ENCODE measurements at regions of chr5 and their contacts with region 1.

Region 1: GRCh38 chr5:140647042-140647341 is 438 bp downstream of the NDUFA2 start:
- DNase-seq: peak; percentile 22

Region 2: GRCh38 chr5:140401362-140402257 is 245.4 kb before region 1 on chr5 and contains the start of gene ANKHD1:
- CTCF ChIA-PET with region 1: no interaction called
- POLR2A ChIA-PET with region 1: interaction called, 14 read pairs
- DNase-seq: peak; percentile 90

Region 3: DNA sequence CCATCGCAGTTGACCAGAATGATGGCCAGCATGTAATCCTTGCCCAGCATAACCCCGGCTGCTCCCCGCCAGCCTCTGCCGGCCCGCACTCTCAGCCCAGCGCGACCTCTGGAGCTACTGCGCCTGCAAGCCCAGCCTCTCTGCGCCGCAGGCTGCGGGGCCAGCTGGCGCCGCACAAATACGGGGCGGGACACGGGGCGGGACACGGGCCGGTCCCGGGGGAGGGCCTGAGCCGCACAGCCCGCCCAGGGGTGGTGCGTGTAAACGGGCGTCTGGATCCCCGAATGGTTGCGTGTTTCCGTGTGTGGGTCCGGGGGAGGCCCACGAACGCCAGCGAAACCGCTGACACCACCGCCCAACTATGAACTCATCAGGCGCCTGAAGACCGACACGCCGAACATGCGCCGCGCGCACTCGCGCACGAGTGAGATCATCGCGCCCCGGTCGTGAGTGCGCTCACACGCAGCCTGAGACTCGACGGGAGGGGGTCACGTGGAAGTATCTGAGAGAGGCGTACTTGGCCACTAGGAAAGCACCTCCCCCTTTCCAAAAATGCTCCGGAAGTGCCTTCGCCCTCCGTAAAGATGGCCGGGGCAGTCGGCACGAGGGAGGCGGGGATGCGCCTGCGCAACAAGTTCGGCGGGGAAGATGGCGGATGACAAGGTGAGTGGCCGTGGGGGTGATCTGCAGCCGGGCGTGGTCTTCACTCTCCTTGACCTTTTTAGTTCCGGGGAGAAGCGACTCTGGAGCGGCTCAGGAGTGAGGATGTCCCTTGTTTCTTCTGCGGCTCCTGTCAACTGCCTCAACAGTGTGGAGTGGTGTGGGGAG is 82.6 kb before region 1 on chr5 and contains the starts of genes APBB3 and SLC35A4:
- CTCF ChIA-PET with region 1: interaction called, 4 read pairs
- POLR2A ChIA-PET with region 1: interaction called, 16 read pairs
- DNase-seq: peak; percentile 94

Region 4: DNA sequence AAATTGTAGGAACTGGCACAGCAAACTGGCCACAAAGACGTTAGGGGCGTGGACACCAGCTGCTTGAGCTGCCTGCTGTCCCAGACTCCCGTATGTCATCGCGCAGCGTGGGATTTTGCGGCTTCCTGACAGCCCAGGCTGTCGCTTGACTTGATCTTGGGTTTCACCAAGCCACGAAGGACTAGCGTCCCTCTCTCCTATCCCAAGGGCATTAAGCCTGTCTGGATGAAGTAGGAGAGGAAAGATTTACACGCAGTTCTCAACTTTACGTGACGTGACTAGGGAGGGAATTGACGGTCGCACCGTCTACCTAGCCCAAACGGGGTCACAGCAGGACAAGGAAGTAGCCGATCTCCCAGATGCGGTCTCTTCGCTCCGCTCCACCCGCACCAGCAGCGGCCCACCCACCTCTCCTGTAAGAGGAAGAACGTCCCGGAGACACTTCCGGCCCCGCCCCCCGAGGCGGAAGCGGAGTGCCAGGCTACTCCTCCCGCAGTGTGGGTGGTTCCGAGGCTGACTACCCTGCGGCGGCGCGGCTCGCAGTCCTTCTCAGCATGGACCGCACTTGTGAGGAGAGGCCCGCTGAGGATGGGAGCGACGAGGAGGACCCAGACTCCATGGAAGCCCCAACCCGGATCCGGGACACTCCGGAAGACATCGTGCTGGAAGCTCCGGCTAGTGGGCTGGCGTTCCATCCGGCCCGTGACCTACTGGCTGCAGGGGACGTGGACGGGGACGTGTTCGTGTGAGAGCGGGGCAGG is 17.5 kb after region 1 on chr5 and contains the start of gene WDR55:
- CTCF ChIA-PET with region 1: no interaction called
- POLR2A ChIA-PET with region 1: interaction called, 46 read pairs
- DNase-seq: peak; percentile 94

Region 5: DNA sequence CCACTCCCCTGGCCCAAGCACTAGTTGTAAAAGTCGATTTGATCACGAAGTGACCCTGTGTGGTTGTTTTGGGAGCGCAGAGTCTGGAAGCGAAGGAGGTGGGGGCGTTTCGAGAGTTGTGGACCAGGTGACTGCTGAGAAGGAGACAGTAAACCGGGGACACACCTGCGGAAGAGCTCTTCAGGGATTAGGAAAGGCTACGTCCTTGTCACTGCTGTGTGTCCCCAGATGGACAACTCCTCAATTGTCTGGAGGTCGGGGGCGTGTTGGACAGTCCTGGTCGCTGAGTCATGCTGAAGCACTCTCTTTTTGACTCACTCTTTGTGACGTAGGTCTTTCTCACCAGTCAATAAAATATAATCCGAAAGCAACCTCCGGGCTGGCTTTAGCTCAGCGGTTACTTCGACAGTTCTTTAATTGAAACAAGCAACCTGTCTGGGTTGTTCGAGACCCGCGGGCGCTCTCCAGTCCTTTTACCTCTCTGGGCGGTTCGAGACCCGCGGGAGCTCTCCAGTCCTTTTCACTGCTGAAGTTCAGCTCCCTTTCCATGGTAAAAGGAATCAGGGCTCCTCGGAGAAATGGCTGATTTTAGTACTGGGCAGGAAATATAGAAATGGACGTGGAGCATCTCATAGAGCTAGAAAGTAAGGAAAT is 64.0 kb after region 1 on chr5:
- CTCF ChIA-PET with region 1: no interaction called
- POLR2A ChIA-PET with region 1: interaction called, 19 read pairs
- DNase-seq: peak; percentile 73